ENCODE measurements at regions of chr14 and their contacts with region 1.

Region 1: DNA sequence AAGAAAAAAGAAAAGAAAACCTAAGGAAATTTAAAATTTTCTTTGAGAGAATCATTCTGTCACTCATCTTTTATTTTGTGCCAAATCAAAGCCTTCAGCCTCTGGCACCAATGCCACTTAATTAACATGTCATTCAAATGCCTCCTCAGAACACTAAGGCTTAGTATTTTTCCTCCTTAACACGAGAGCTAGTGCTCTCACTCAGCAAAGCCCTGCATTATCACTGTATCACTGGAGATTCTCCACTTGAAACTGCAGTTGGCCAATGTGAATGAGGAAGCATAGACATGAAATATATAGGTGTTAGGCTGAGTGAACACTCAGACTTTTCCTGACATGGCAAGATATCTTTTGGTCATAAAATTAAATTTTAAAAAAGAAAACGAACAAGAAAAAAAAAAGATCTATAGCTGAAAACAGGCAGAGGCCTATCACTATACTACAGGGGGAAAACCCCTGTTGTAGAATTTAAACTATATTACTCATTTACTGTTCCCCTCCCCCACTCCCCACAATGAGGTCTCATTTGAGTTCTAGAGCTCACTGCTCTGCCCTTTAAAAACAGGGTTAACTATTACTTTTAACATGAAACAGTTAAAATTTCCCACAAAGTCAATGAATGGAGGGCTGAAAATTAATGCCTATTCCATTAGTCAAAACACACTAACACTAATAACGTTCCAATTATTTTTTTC is 5.1 kb downstream of the MBIP start:
- DNase-seq: no peak
- H3K4me3 Mint-ChIP-seq: no peak overlapping the region
- H3K27ac Mint-ChIP-seq: no peak overlapping the region
- H3K4me1 Mint-ChIP-seq: peaks cover 10% of the 10 kb centered on the region
- H3K27me3 Mint-ChIP-seq: no peaks in the 10 kb centered on the region
- CTCF ChIP-seq: no peak

Region 2: GRCh38 chr14:35985495-35986218 is 329.6 kb before region 1 on chr14:
- CTCF ChIA-PET with region 1: no interaction called
- POLR2A ChIA-PET with region 1: no interaction called
- intact Hi-C with region 1: no loop called
- DNase-seq: no peak
- H3K4me3 Mint-ChIP-seq: no peak overlapping the region
- H3K27ac Mint-ChIP-seq: no peak overlapping the region
- H3K4me1 Mint-ChIP-seq: peaks cover 5% of the 10 kb centered on the region
- H3K27me3 Mint-ChIP-seq: no peaks in the 10 kb centered on the region
- CTCF ChIP-seq: no peak

Region 3: DNA sequence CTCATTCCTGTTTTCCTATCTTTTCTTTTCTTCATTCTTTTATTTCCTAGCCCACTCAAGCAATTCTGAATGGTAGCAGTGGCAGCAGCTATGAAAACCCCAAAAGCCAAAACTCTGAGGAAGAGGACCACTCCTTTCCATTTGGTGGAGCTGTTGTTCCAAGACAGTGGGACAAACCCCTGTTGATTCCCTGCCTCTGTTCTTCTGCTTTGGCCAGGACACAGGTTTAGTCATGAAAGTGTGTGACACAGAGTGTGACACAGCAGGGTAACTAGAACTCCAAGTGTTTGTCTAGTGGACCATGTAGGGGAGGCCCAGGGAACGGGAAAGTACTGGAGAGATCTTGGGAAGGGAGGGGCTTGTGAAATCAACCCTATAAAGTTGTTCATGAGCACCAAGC is 209.9 kb before region 1 on chr14:
- CTCF ChIA-PET with region 1: no interaction called
- POLR2A ChIA-PET with region 1: no interaction called
- intact Hi-C with region 1: loop called (anchors 1 kb)
- DNase-seq: peak; percentile 58
- H3K4me3 Mint-ChIP-seq: no peak overlapping the region
- H3K27ac Mint-ChIP-seq: no peak overlapping the region
- H3K4me1 Mint-ChIP-seq: no peaks in the 10 kb centered on the region
- H3K27me3 Mint-ChIP-seq: peaks cover 2% of the 10 kb centered on the region
- CTCF ChIP-seq: no peak

Measured in MCF 10A (cell line).